Endothelial cell of umbilical vein (primary cell): ENCODE measurements at regions of chr17 and their contacts with region 1.

Region 1: GRCh38 chr17:17712268-17712924 is 31.1 kb downstream of the RAI1 start:
- DNase-seq: peak; percentile 94
- H3K4me3 ChIP-seq: no peak overlapping the region
- H3K27ac ChIP-seq: peak overlapping the region; percentile 98
- H3K4me1 ChIP-seq: peaks cover 33% of the 10 kb centered on the region
- H3K27me3 ChIP-seq: no peaks in the 10 kb centered on the region
- CTCF ChIP-seq: no peak
- POLR2A ChIP-seq: no peak

Region 2: GRCh38 chr17:17416007-17416399 is 296.4 kb before region 1 on chr17:
- CTCF ChIA-PET with region 1: no interaction called
- POLR2A ChIA-PET with region 1: no interaction called
- dilution Hi-C with region 1: no loop called
- intact Hi-C with region 1: no loop called
- DNase-seq: peak; percentile 91
- H3K4me3 ChIP-seq: no peak overlapping the region
- H3K27ac ChIP-seq: peak overlapping the region; percentile 94
- H3K4me1 ChIP-seq: peaks cover 48% of the 10 kb centered on the region
- H3K27me3 ChIP-seq: no peaks in the 10 kb centered on the region
- CTCF ChIP-seq: no peak
- POLR2A ChIP-seq: no peak

Region 3: GRCh38 chr17:17648762-17649161 is 63.6 kb before region 1 on chr17:
- CTCF ChIA-PET with region 1: no interaction called
- POLR2A ChIA-PET with region 1: no interaction called
- dilution Hi-C with region 1: no loop called
- intact Hi-C with region 1: no loop called
- DNase-seq: no peak
- H3K4me3 ChIP-seq: no peak overlapping the region
- H3K27ac ChIP-seq: no peak overlapping the region
- H3K4me1 ChIP-seq: no peaks in the 10 kb centered on the region
- H3K27me3 ChIP-seq: peaks cover 3 to 4% of the 10 kb centered on the region in 2 experiments
- CTCF ChIP-seq: no peak
- POLR2A ChIP-seq: no peak

Region 4: GRCh38 chr17:17694169-17695081 is 18.0 kb before region 1 on chr17:
- CTCF ChIA-PET with region 1: interaction called, 3 read pairs
- POLR2A ChIA-PET with region 1: no interaction called
- dilution Hi-C with region 1: no loop called
- intact Hi-C with region 1: loop called (anchors 1 kb)
- DNase-seq: peak; percentile 83
- H3K4me3 ChIP-seq: peak overlapping the region; percentile 40 to 55 (median 48)
- H3K27ac ChIP-seq: peak overlapping the region; percentile 88
- H3K4me1 ChIP-seq: peaks cover 42% of the 10 kb centered on the region
- H3K27me3 ChIP-seq: no peaks in the 10 kb centered on the region
- CTCF ChIP-seq: no peak
- POLR2A ChIP-seq: peak; percentile 62

Region 5: DNA sequence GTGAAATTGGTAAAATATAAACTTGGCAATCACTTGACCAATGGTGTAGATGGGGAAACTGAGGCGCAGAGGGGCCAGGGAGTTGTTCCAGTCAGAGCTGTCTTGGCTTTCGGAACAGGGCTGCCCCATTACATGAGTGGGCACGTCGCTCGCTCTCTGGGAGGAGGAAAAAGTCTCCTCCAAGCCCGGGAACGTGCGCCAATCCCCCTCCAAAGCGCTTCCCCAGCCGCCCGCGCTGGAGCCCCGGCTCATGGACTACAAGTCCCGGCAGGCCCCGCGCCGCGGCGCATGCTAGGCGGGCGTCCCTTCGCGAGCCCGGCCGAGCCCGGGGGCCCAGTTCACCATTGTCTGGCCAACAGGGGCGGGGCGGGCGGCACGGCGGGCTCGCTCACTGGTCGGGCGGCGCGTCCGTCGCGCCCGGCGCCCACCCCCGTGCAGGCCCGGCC is 512.7 kb after region 1 on chr17:
- CTCF ChIA-PET with region 1: no interaction called
- POLR2A ChIA-PET with region 1: no interaction called
- dilution Hi-C with region 1: no loop called
- intact Hi-C with region 1: no loop called
- DNase-seq: peak; percentile 91
- H3K4me3 ChIP-seq: peak overlapping the region in 1 of 3 experiments; percentile 30
- H3K27ac ChIP-seq: no peak overlapping the region
- H3K4me1 ChIP-seq: peaks cover 18% of the 10 kb centered on the region
- H3K27me3 ChIP-seq: no peaks in the 10 kb centered on the region
- CTCF ChIP-seq: no peak
- POLR2A ChIP-seq: no peak